Common myeloid progenitor, CD34-positive (primary cell): ENCODE measurements at regions of chr11 and their contacts with region 1.

Region 1: DNA sequence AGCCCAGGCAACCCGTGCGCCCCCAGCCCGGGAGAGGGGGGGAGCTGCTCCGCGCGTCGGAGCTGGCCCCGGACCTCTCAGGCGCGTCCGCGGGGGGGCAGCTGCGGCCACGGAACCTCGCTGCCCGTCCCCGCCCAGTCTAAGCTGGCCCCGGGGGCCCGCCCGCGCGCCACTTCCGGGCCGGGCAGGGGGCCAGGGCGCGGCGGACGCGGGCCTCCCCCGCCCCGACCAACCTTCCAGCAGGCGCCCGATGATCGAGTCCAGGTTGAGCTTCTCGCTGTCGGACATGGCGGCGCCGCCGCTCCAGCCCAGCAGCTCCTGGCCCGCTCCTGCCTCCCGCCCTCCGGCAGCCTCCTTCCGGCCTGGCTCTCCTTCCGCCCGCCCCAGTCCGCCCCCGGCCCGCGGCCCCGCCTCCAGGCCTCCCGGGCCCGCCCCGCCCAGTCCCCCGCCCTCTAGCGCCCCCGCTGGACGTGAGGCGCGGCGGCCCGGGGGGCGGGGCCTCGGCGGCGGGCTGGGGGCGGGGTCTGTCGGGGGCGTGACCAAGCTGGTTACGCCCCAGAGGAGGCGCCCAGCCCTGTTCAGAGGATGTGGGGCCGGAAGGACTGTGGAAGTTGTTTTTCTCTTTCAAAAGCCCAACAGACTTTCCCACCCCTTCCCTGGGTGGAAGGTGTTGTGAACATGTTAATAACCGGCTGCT is at the start of gene PPP1CA:
- DNase-seq: peak; percentile 84 to 91 (median 89)
- H3K4me3 ChIP-seq: peak within 1 kb of the TSS; percentile 64 to 89 (median 82)
- H3K27ac ChIP-seq: peak within 1 kb of the TSS; percentile 54 to 83
- H3K4me1 ChIP-seq: peaks cover 7 to 90% (median 80%) of the 10 kb centered on the region in 4 experiments
- H3K27me3 ChIP-seq: no peaks in the 10 kb centered on the region

Region 2: DNA sequence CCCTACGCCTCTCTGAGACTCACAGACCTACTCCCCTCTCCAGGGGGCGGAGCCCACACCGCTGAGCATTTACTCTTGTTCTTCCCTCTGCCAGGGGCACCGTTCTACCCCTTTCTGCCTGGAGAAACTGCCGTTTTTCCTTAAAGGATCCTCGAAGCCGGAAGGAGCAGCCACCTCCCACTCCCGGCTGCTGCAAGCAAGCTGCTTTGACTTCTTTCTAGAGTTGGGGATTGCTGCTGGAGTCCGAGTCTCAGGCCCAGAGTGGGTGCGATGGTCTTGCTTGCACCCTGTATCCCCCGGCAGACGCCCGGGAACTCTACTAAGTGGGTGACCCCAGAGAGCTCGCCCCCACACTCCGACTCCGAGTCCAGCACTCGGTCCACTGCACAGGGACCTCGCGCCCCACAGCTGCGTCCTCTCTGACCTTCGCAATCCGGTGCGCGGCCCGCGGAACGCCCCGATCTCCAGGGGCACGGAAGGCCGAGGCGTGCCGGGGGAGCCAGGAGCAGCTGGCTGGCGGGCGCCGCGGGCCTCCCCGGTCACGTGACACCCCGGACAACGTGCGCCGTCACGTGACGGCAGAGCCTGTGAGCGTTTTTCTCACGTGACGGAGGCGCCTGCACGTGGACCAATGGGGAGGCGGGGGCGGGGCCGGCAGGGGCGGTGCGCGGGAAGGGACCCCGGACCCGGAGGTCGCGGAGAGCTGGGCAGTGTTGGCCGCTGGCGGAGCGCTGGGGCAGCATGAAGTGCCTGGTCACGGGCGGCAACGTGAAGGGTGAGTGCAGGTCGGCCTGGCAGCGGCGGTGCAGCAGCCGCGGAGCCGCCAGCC is 10.1 kb before region 1 on chr11 and contains the start of gene RAD9A:
- CTCF ChIA-PET with region 1: interaction called, 18 read pairs
- POLR2A ChIA-PET with region 1: interaction called, 9 read pairs
- DNase-seq: peak; percentile 93 to 96 (median 95)
- H3K4me3 ChIP-seq: peak within 1 kb of the TSS; percentile 46 to 90 (median 74)
- H3K27ac ChIP-seq: peak within 1 kb of the TSS; percentile 50 to 79
- H3K4me1 ChIP-seq: peaks cover 3 to 47% (median 23%) of the 10 kb centered on the region in 4 experiments
- H3K27me3 ChIP-seq: no peaks in the 10 kb centered on the region

Region 3: DNA sequence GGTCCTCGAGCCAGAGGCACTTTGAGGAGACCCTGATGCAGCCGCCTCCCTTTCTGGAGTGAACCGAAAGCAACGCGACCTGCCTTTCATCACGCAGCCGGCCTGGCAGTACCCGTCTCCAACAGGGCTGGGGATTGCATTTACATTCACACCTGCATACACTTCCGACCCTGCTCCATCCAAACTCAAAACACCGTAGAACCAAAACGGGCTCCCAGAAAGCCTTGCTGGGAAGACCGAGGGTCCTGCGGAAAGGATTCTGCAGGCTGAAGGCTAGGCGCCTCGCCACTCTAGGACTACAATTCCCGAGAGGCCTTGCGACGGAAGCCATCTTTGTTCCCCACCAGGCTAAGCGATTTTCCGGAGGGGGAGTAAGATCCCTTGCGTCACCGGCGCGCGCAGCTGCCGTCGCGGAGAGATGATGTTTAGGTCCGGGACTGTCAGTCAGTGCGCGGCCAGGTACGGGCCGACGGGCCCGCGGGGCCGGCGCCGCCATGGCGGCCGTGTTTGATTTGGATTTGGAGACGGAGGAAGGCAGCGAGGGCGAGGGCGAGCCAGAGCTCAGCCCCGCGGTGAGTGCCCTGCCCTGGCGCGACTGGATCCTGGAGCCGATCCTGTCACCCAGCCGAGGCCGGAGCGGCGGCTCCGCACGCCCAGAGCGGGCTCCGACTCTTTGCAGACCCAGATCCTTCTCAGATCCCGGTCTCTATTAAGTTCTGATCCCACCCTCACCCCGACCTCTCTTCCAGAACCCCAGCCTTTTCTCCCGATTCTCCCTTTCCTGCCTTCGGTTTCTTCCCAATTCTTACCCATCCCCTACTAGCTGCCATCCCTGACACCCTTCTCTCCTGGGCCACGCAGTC is 26.6 kb after region 1 on chr11 and contains the start of gene RPS6KB2:
- CTCF ChIA-PET with region 1: interaction called, 22 read pairs
- POLR2A ChIA-PET with region 1: interaction called, 10 read pairs
- DNase-seq: peak; percentile 98
- H3K4me3 ChIP-seq: peak within 1 kb of the TSS; percentile 86 to 99 (median 94)
- H3K27ac ChIP-seq: peak within 1 kb of the TSS; percentile 90 to 95
- H3K4me1 ChIP-seq: peaks cover 3 to 33% (median 21%) of the 10 kb centered on the region in 4 experiments
- H3K27me3 ChIP-seq: no peaks in the 10 kb centered on the region

Region 4: GRCh38 chr11:67441731-67442351 is 40.2 kb after region 1 on chr11:
- CTCF ChIA-PET with region 1: interaction called, 18 read pairs
- POLR2A ChIA-PET with region 1: interaction called, 7 read pairs
- DNase-seq: no peak
- H3K4me3 ChIP-seq: no peak overlapping the region
- H3K27ac ChIP-seq: no peak overlapping the region
- H3K4me1 ChIP-seq: peaks cover 1 to 73% (median 65%) of the 10 kb centered on the region in 4 experiments
- H3K27me3 ChIP-seq: no peaks in the 10 kb centered on the region

Region 5: GRCh38 chr11:67458266-67458665 is 56.6 kb after region 1 on chr11:
- CTCF ChIA-PET with region 1: no interaction called
- POLR2A ChIA-PET with region 1: no interaction called
- DNase-seq: no peak
- H3K4me3 ChIP-seq: no peak overlapping the region
- H3K27ac ChIP-seq: no peak overlapping the region
- H3K4me1 ChIP-seq: peaks cover 0 to 11% (median 5%) of the 10 kb centered on the region in 4 experiments
- H3K27me3 ChIP-seq: no peaks in the 10 kb centered on the region